Activated T-helper 1 cell treated with anti-CD3 and anti-CD28 coated beads, Interleukin-12 subunit alpha, Interleukin-12 subunit beta, Interleukin-2, Interleukin-4 antibody, amounts not matched to agents 30 ng/mL and 10 ng/mL and 1 ng/mL, durations not matched to agents 14 hours and 24 hours and 36 hours (primary cell): ENCODE measurements at regions of chr3 and their contacts with region 1.

Region 1: GRCh38 chr3:138774529-138775253 is 60.0 kb downstream of the PIK3CB start:
- DNase-seq: no peak
- H3K4me3 Mint-ChIP-seq: no peak overlapping the region
- H3K27ac Mint-ChIP-seq: peak overlapping the region; percentile 59
- H3K4me1 Mint-ChIP-seq: peaks cover 32% of the 10 kb centered on the region
- H3K27me3 Mint-ChIP-seq: no peaks in the 10 kb centered on the region

Region 2: DNA sequence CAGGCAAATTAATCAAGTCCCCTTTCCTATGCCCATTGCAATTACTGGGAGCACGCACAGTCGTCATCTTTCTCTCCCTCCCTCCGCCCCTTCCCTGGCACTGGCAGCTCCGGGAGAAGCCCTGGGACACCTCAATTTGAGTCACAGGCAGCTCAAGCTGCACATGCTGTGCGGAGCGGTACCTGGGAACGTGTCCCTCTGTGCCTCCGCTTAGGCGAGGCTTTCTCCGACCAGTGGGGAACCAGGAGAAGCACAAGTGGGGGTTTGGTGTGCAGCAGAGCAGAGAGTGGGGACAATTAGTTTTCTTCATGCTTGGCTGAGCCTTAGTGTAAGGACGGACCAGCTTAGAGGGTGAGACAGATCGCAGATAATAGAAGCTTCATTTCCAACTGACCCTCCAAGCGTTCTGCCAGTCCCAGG is 922.3 kb before region 1 on chr3:
- intact Hi-C with region 1: no loop called
- DNase-seq: no peak
- H3K4me3 Mint-ChIP-seq: no peak overlapping the region
- H3K27ac Mint-ChIP-seq: no peak overlapping the region
- H3K4me1 Mint-ChIP-seq: no peaks in the 10 kb centered on the region
- H3K27me3 Mint-ChIP-seq: no peaks in the 10 kb centered on the region

Region 3: DNA sequence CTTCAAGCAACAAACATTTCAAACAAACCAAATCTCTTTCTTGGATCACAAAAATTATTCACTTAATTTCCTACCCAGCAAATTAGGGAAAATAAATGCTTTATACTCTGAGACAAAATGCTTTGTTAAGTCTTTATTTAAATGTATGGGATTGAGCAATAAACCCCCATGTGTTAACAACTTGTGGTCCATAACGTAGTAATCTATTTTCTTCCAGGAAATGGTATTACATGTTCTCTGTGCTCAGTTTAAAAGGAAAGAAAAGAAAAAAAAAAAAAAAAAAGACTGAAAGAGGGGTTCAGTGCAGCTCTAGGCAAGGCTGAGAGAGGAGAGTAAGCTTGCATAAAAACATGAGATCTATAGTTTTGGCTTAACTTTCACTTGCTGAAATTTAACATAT is 42.2 kb before region 1 on chr3:
- intact Hi-C with region 1: loop called (anchors 5 kb)
- DNase-seq: no peak
- H3K4me3 Mint-ChIP-seq: no peak overlapping the region
- H3K27ac Mint-ChIP-seq: no peak overlapping the region
- H3K4me1 Mint-ChIP-seq: peaks cover 6% of the 10 kb centered on the region
- H3K27me3 Mint-ChIP-seq: no peaks in the 10 kb centered on the region